HCT116 (cell line): ENCODE measurements at regions of chr7 and their contacts with region 1.

Region 1: GRCh38 chr7:80027611-80028173 is 106.9 kb upstream of the GNAI1 start:
- DNase-seq: no peak
- ATAC-seq: no peak
- H3K4me3 ChIP-seq: no peak overlapping the region
- H3K27ac ChIP-seq: no peak overlapping the region
- H3K4me1 ChIP-seq: no peaks in the 10 kb centered on the region
- H3K27me3 ChIP-seq: no peaks in the 10 kb centered on the region
- CTCF ChIP-seq: no peak
- POLR2A ChIP-seq: no peak
- RAD21 ChIP-seq: no peak

Region 2: DNA sequence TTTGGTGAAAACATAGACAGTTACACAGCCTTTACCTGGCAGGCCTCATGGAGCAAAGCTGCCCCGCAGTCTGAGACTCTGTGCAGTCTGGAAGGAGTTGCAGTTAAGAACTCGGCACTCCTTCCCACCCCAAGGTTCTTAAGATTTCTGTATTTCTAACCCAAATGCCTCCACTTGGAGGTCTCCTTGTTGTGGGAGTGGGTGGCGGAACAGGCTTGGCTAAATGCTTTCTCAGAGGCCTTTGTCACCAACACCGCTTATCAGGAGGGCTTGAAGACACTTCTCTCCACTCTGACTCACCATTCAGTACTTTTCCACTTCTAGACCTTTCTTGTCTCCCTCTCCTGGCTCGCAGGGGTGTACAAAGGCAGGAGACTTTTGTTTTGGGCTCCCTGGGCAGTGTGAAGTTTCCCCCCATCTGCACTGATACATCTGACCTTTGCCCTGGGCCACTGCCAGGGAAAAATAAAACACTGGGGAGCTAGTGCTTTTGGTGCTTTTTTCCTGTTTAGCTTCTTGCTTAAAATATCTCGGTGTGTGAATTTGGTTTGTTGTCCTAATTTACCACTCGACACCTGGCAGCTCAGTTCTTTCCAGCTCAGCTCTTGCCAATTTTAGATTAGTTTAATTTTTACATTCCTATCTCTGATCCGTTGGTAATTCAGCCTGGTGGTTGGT is 522.8 kb before region 1 on chr7:
- CTCF ChIA-PET with region 1: no interaction called
- POLR2A ChIA-PET with region 1: no interaction called
- RAD21 ChIA-PET with region 1: no interaction called
- intact Hi-C with region 1: loop called (anchors 10 kb)
- DNase-seq: peak; percentile 15
- ATAC-seq: peak; percentile 52
- H3K4me3 ChIP-seq: no peak overlapping the region
- H3K27ac ChIP-seq: peak overlapping the region; percentile 38
- H3K4me1 ChIP-seq: peaks cover 21 to 25% of the 10 kb centered on the region in 2 experiments; a peak in 3 of 4 replicates
- H3K27me3 ChIP-seq: no peaks in the 10 kb centered on the region
- CTCF ChIP-seq: no peak
- POLR2A ChIP-seq: no peak
- RAD21 ChIP-seq: no peak

Region 3: DNA sequence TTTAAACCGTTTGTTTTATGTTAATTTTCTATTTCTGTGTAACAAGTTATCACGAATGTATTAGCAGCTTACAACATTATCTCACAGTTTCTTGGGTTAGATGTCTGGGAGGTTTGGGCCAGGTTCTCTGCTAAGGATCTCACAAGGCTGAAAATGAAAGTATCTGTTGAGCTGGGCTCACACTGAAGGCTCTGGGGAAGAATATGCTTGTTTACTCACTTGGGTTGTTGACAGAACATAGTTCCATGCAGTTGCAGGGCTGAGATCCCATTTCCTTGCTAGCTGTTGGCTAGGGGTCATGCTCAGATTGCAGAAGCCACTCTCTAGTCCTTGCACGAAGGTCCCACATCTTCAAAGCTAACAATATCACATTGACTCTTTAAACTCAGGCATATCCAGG is 159.7 kb before region 1 on chr7:
- CTCF ChIA-PET with region 1: no interaction called
- POLR2A ChIA-PET with region 1: no interaction called
- RAD21 ChIA-PET with region 1: no interaction called
- intact Hi-C with region 1: no loop called
- DNase-seq: no peak
- ATAC-seq: no peak
- H3K4me3 ChIP-seq: no peak overlapping the region
- H3K27ac ChIP-seq: no peak overlapping the region
- H3K4me1 ChIP-seq: no peaks in the 10 kb centered on the region
- H3K27me3 ChIP-seq: no peaks in the 10 kb centered on the region
- CTCF ChIP-seq: no peak
- POLR2A ChIP-seq: no peak
- RAD21 ChIP-seq: no peak